AG04449 (cell line): ENCODE measurements at regions of chr6 and their contacts with region 1.

Region 1: DNA sequence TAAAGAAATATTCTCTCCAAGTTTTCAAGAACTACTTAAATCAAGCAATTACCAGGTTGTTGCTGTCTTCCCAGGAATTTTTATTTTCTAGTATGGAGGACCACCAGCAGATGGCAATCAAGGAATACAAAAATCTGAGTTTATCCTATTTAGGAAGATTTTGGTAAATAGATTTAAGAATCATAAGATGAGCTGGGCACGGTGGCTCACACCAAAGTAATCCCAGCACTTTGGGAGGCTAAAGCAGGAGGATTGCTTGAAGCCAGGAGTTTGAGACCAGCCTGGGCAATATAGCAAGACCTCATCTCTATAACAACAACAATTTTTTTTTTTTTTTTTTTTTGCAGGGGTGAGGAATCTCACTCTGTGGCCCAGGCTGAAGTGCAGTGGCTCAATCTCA is 19.3 kb upstream of the SEC63 start:
- DNase-seq: no peak
- H3K4me3 ChIP-seq: no peak overlapping the region
- CTCF ChIP-seq: no peak

Region 2: GRCh38 chr6:107209406-107210305 is 767.6 kb before region 1 on chr6:
- CTCF ChIA-PET with region 1: no interaction called
- POLR2A ChIA-PET with region 1: no interaction called
- DNase-seq: no peak
- H3K4me3 ChIP-seq: no peak overlapping the region
- CTCF ChIP-seq: no peak

Region 3: GRCh38 chr6:107600936-107601335 is 376.3 kb before region 1 on chr6:
- CTCF ChIA-PET with region 1: no interaction called
- POLR2A ChIA-PET with region 1: no interaction called
- DNase-seq: no peak
- H3K4me3 ChIP-seq: no peak overlapping the region
- CTCF ChIP-seq: no peak

Region 4: GRCh38 chr6:107964671-107965340 is 12.5 kb before region 1 on chr6:
- CTCF ChIA-PET with region 1: interaction called, 62 read pairs
- POLR2A ChIA-PET with region 1: no interaction called
- DNase-seq: no peak
- H3K4me3 ChIP-seq: no peak overlapping the region
- CTCF ChIP-seq: no peak

Region 5: GRCh38 chr6:107991061-107991460 is 13.8 kb after region 1 on chr6:
- CTCF ChIA-PET with region 1: interaction called, 57 read pairs
- POLR2A ChIA-PET with region 1: no interaction called
- DNase-seq: no peak
- H3K4me3 ChIP-seq: no peak overlapping the region
- CTCF ChIP-seq: no peak

Region 6: DNA sequence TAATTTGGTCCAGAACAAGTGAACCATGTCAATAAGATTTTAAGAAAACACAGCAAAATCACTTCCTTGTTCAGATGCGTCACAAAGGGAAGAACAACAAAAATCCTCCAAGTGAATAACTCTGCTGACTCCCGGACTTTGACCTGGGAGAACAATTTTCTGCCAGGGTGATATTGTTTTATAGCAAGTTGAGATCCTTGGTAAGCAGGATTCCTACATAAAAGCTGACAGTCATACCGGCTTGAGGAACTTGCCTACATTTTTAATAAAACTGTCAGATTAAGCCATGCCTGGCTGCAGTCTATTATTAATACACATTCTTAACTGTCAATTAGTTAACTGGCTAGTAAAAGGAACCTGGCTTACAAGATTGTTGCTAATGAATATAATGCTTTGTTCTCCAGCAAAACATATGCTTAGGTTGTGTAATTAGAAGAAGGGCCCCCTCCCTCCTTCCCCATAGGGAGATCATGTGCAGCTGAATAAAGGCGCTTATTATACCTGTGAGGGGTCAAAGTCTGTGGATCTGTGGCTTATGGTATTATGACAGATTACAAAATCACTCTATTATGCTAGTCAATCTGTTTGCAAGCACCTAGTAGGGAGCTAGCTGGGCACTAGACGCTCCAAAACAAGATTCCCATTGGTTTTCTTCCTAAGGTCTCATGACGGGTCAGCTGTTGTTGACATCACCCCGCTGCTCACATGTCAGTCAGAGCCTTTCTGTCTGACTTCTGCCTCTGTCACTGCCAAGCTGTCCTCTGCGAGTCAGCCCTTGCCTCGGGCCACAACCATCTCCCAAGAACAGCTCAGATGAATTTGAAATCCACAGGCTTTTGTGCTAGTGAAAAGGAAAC is 25.3 kb after region 1 on chr6:
- CTCF ChIA-PET with region 1: interaction called, 13 read pairs
- POLR2A ChIA-PET with region 1: no interaction called
- DNase-seq: no peak
- H3K4me3 ChIP-seq: no peak overlapping the region
- CTCF ChIP-seq: no peak

Region 7: DNA sequence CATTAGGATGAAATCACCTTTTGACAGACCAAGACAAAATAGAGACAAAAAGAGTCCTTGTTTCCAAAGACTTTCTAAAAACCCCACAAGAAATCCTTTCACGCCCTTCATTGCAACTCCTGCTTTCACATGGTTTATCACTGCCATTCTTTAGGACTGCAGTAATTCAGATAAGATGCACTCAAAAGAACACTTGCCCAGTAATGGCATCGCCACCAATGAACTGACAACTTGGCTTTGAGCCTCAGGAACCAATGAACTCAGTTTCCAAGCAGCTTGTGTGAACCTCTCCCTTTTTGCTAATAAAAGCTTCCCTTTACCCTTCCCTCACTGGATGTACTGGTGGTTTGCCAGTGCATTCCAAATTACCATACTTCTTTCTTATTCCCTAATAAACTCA is 75.4 kb after region 1 on chr6:
- CTCF ChIA-PET with region 1: interaction called, 194 read pairs
- POLR2A ChIA-PET with region 1: no interaction called
- DNase-seq: no peak
- H3K4me3 ChIP-seq: no peak overlapping the region
- CTCF ChIP-seq: no peak

Region 8: GRCh38 chr6:108526739-108527174 is 549.5 kb after region 1 on chr6:
- CTCF ChIA-PET with region 1: interaction called, 27 read pairs
- POLR2A ChIA-PET with region 1: no interaction called
- DNase-seq: no peak
- H3K4me3 ChIP-seq: no peak overlapping the region
- CTCF ChIP-seq: peak; percentile 62